ENCODE measurements at regions of chrX and their contacts with region 1.

Region 1: DNA sequence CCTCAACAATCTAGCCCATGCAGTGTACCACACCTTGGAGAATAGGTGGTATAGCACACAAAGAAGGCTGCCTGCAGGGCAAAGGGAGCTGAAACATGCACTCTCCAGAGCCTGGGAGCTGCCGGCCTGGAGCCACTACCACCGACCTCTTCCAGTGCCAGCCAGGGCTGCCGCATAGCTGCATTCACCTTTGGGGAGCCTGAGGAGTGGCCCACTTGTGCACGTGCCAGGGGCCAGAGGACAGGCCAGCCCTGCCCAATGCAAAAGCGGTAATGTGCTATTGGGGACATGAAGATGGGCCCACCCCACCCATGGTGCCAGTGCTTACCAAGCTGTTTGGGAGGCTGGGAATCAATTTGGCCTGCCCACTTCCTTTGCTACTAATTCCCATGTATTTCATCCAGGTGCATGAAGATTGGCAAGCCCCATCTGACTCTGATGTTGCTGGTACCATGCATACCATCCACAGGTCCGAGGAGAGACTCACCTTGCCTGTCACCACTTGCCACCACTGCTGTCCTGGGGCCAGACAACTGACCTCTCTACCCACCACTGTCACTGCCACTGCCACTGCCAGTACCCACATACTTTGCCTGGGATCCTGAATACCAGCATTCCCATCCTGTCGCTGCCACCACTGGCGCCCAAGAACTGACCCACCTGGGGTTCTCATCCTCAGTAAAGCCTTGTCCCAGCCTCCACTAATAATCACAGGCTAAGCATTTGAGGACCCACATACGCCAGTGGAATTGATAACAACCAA is 506.9 kb downstream of the MAGEB5 start:
- DNase-seq: no peak
- ATAC-seq: no peak
- H3K4me3 ChIP-seq: no peak overlapping the region
- H3K4me3 Mint-ChIP-seq: no peak overlapping the region
- H3K27ac ChIP-seq: no peak overlapping the region
- H3K27ac Mint-ChIP-seq: no peak overlapping the region
- H3K4me1 ChIP-seq: no peaks in the 10 kb centered on the region
- H3K4me1 Mint-ChIP-seq: no peaks in the 10 kb centered on the region
- H3K27me3 ChIP-seq: no peaks in the 10 kb centered on the region
- H3K27me3 Mint-ChIP-seq: no peaks in the 10 kb centered on the region
- CTCF ChIP-seq: no peak

Region 2: DNA sequence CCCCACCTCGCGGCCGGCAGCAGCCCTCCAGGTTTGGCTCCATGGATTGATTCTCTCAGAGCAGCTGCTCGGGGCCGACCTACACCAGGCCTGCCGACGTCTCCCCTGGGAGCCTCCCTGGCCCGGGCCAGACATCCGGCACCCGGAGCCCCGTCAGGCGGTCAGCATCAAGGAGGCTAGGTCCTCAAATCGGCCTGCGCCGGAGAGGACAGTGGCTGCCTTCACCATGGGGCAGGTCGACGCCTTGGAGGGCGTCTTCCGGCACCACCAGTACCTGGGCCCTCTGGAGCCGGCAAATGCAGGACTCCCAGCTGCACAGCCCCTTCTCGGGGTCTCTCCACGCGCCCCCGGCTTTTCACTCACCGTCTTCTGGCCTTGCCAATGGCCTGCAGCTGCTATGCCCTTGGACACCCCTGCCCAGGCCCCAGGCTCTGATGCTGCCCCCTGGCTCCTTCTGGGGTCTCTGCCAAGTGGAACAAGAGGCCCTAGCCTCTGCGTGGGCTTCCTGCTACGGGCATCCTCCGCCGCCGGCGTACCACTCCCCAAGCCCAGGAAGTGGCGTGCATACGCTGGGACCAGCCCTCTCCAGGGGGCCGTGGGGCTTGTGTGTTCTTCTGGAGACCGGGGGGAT is 165.0 kb before region 1 on chrX:
- CTCF ChIA-PET with region 1: no interaction called
- POLR2A ChIA-PET with region 1: no interaction called
- intact Hi-C with region 1: no loop called
- DNase-seq: no peak
- ATAC-seq: no peak
- H3K4me3 ChIP-seq: no peak overlapping the region
- H3K4me3 Mint-ChIP-seq: no peak overlapping the region
- H3K27ac ChIP-seq: no peak overlapping the region
- H3K27ac Mint-ChIP-seq: no peak overlapping the region
- H3K4me1 ChIP-seq: no peaks in the 10 kb centered on the region
- H3K4me1 Mint-ChIP-seq: no peaks in the 10 kb centered on the region
- H3K27me3 ChIP-seq: no peaks in the 10 kb centered on the region
- H3K27me3 Mint-ChIP-seq: no peaks in the 10 kb centered on the region
- CTCF ChIP-seq: no peak

Region 3: GRCh38 chrX:28550331-28550872 is 1827.6 kb after region 1 on chrX:
- CTCF ChIA-PET with region 1: no interaction called
- POLR2A ChIA-PET with region 1: no interaction called
- intact Hi-C with region 1: loop called in 1 of 2 experiments (anchors 10 kb)
- DNase-seq: no peak
- ATAC-seq: no peak
- H3K4me3 ChIP-seq: no peak overlapping the region
- H3K4me3 Mint-ChIP-seq: no peak overlapping the region
- H3K27ac ChIP-seq: no peak overlapping the region
- H3K27ac Mint-ChIP-seq: no peak overlapping the region
- H3K4me1 ChIP-seq: no peaks in the 10 kb centered on the region
- H3K4me1 Mint-ChIP-seq: no peaks in the 10 kb centered on the region
- H3K27me3 ChIP-seq: no peaks in the 10 kb centered on the region
- H3K27me3 Mint-ChIP-seq: no peaks in the 10 kb centered on the region
- CTCF ChIP-seq: no peak

Measured in CD8-positive, alpha-beta T cell (primary cell).